Activated CD4-positive, alpha-beta memory T cell treated with anti-CD3 and anti-CD28 coated beads for 36 hours (primary cell): ENCODE measurements at regions of chr1 and their contacts with region 1.

Region 1: DNA sequence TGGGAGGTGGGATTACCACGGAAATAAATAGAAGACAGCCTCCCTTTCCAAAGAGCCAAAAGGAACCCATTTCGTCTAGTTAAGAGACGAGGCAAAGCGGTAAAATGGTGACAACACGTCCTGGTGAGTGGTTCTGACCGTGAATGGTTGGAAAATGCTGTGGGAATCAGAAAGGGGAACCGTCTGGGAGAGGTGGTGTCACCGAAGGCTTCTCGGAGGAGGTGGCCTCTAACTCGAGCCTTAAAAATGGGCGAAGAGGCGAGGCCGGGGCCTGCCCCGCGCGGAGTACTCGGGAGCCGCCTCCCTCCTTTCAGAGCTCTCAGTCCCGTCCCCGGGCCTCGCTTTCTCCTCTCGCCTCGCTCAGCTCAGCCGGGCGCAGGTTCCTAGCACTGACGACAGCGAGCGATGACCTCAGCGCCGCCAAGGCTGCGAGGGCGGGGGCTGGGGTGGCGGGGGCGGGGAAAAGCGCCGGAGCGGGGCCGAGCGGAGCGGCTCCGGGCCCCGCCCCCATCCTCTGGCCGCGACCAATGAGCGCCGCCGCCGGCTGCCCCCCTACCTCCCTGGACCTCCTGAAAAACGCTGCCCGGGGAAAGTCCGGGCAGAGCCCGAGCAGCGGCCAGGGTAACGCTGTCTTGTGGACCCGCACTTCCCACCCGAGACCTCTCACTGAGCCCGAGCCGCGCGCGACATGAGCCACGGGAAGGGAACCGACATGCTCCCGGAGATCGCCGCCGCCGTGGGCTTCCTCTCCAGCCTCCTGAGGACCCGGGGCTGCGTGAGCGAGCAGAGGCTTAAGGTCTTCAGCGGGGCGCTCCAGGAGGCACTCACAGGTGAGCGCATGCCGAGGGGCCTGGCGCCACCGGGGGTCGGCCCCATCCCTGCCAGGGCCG is at the start of gene BTG2:
- DNase-seq: peak; percentile 95
- H3K4me3 Mint-ChIP-seq: peak within 1 kb of the TSS; percentile 92
- H3K27ac Mint-ChIP-seq: peak within 1 kb of the TSS; percentile 98
- H3K4me1 Mint-ChIP-seq: peaks cover 51% of the 10 kb centered on the region
- H3K27me3 Mint-ChIP-seq: no peaks in the 10 kb centered on the region
- total RNA-seq, gene BTG2: 150 TPM

Region 2: DNA sequence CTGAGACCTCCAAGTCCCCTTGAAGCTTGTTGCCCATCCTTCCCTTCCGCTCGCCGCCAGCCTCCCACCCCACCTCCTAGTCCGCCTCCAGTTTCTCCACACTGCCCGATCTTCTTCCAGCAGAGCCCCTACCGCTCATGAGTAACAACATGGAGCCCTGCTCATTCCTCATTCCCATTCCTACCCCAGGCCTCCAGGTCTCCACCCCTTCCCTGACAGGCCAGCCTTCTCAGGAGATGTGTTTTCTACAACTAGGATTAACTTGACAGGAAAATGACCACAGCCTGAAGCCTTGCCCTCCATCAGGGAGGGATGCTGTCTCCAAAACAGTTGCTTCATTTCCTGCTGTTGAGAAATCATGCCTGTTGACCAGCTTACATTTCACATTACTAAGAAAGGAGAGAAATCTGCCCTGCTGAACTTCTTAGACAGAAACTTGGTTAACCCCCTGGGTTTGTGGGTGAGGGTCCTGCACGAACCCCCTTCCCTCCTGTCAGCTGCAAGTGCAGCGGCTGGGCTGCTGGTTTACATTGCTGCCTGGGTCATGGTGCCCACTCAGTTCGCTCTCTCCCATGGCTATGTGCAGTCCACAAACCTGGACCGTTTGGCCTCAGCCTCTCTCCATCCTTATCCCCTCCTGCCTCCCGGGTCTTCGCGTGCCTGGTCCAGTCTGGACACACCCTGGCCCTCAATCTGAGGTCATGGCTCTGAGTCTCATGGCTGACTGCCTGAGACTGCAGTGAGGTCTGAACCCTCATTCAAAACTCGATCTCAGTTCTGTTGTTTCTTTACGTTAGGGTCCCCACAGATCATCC is 102.5 kb before region 1 on chr1:
- CTCF ChIA-PET with region 1: no interaction called
- POLR2A ChIA-PET with region 1: no interaction called
- intact Hi-C with region 1: no loop called
- DNase-seq: no peak
- H3K4me3 Mint-ChIP-seq: no peak overlapping the region
- H3K27ac Mint-ChIP-seq: no peak overlapping the region
- H3K4me1 Mint-ChIP-seq: no peaks in the 10 kb centered on the region
- H3K27me3 Mint-ChIP-seq: peaks cover 11% of the 10 kb centered on the region

Region 3: GRCh38 chr1:203273206-203273868 is 31.8 kb before region 1 on chr1:
- CTCF ChIA-PET with region 1: interaction called, 28 read pairs
- POLR2A ChIA-PET with region 1: interaction called, 24 read pairs
- intact Hi-C with region 1: loop called (anchors 1 kb)
- DNase-seq: peak; percentile 95
- H3K4me3 Mint-ChIP-seq: peak overlapping the region; percentile 63
- H3K27ac Mint-ChIP-seq: peak overlapping the region; percentile 72
- H3K4me1 Mint-ChIP-seq: peaks cover 64% of the 10 kb centered on the region
- H3K27me3 Mint-ChIP-seq: no peaks in the 10 kb centered on the region

Region 4: GRCh38 chr1:203320591-203321272 is 15.6 kb after region 1 on chr1:
- CTCF ChIA-PET with region 1: interaction called, 113 read pairs
- POLR2A ChIA-PET with region 1: interaction called, 238 read pairs
- intact Hi-C with region 1: no loop called
- DNase-seq: peak; percentile 78
- H3K4me3 Mint-ChIP-seq: peak overlapping the region; percentile 22
- H3K27ac Mint-ChIP-seq: peak overlapping the region; percentile 88
- H3K4me1 Mint-ChIP-seq: peaks cover 75% of the 10 kb centered on the region
- H3K27me3 Mint-ChIP-seq: no peaks in the 10 kb centered on the region

Region 5: GRCh38 chr1:203326830-203327683 is 21.9 kb after region 1 on chr1:
- CTCF ChIA-PET with region 1: interaction called, 113 read pairs
- POLR2A ChIA-PET with region 1: interaction called, 238 read pairs
- intact Hi-C with region 1: loop called (anchors 1 kb)
- DNase-seq: peak; percentile 96
- H3K4me3 Mint-ChIP-seq: peak overlapping the region; percentile 75
- H3K27ac Mint-ChIP-seq: peak overlapping the region; percentile 94
- H3K4me1 Mint-ChIP-seq: peaks cover 55% of the 10 kb centered on the region
- H3K27me3 Mint-ChIP-seq: no peaks in the 10 kb centered on the region